ENCODE measurements at regions of chr15 and their contacts with region 1.

Region 1: DNA sequence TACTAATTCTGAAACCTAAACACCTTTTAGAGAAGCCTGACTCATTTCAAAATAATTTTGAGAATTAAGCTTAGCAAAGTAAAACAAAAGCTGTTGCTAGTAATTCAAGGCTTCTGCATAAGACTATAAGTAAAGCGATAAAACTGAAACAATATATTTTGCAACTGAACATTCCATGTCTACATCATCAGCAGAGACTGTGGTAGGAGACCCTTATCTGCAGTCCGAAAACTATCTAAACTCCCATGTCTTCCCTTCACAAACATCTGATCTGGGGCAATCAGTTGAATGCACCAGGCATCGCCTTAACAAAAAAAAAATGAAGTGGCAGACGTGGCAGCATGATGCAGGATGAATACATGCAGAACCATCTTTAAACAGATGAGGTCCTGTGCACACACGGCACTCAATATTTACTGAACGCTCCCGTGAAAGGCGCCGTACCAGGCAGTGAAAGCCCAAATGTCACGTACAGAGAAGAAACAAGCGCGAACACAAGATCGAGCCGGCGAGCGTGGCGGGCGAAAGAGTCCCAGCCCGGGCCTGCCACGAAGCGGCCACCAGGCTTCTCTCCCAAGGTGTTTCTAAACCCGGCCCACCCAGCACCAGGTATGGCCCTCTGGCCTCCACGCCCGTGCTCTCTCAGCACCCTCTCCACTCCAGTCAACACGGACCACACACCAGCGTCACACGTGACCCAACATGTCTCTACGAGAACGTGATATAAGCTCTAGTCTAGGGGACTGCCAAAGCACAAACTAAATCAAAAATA is 63.0 kb downstream of the CHSY1 start:
- DNase-seq: no peak
- ATAC-seq: peak in 7 of 8 donors; percentile 34 to 57 (median 36)
- H3K4me3 ChIP-seq: peak overlapping the region in 9 of 10 donors; percentile 3 to 51 (median 43)
- H3K27ac ChIP-seq: peak overlapping the region; percentile 28 to 96 (median 88)
- H3K4me1 ChIP-seq: peaks cover 15 to 100% (median 80%) of the 10 kb centered on the region in 9 donors
- H3K27me3 ChIP-seq: no peaks in the 10 kb centered on the region
- CTCF ChIP-seq: no peak

Region 2: GRCh38 chr15:101024073-101024695 is 164.6 kb before region 1 on chr15:
- intact Hi-C with region 1: loop called in 1 of 10 experiments (anchors 10 kb)
- DNase-seq: peak in 1 of 2 donors; percentile 52
- ATAC-seq: peak; percentile 69 to 89 (median 84)
- H3K4me3 ChIP-seq: no peak overlapping the region
- H3K27ac ChIP-seq: peak overlapping the region; percentile 15 to 81 (median 72)
- H3K4me1 ChIP-seq: peaks cover 0 to 44% (median 18%) of the 10 kb centered on the region in 9 donors
- H3K27me3 ChIP-seq: peaks cover 0 to 9% (median 0%) of the 10 kb centered on the region in 7 donors
- CTCF ChIP-seq: no peak

Region 3: DNA sequence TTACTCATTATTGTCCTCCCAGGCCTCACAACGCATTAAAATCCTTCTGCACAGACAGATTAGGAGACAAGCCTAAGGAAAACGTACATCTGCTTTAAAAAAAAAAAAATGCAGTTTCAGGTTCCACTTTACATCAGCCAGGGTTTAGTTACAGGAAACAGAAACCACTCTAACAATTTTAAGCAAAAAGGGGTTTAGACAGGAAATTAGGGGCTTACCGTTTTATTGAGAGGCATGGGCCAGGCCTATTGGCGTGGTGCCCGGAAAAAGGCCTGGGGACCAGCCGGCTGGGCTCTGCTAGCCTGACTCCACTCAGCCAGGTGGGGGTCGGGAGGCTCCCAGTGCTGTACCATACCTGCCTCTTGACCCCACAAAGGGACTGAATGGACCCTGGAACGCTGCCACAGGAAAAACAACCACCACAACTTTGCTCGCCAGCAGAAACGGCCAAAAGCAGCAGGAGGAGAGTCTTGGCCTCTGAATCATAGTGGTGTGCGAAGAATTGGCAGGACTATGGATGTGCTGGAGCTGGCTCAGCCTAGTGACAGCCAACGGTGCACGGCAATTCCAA is 61.2 kb before region 1 on chr15:
- intact Hi-C with region 1: loop called in 2 of 10 experiments (anchors 10 kb)
- DNase-seq: peak; percentile 73 to 86
- ATAC-seq: peak; percentile 92 to 95 (median 94)
- H3K4me3 ChIP-seq: no peak overlapping the region
- H3K27ac ChIP-seq: peak overlapping the region; percentile 14 to 94 (median 74)
- H3K4me1 ChIP-seq: peaks cover 0 to 69% (median 23%) of the 10 kb centered on the region in 9 donors
- H3K27me3 ChIP-seq: peaks cover 0 to 5% (median 0%) of the 10 kb centered on the region in 7 donors
- CTCF ChIP-seq: no peak

Region 4: DNA sequence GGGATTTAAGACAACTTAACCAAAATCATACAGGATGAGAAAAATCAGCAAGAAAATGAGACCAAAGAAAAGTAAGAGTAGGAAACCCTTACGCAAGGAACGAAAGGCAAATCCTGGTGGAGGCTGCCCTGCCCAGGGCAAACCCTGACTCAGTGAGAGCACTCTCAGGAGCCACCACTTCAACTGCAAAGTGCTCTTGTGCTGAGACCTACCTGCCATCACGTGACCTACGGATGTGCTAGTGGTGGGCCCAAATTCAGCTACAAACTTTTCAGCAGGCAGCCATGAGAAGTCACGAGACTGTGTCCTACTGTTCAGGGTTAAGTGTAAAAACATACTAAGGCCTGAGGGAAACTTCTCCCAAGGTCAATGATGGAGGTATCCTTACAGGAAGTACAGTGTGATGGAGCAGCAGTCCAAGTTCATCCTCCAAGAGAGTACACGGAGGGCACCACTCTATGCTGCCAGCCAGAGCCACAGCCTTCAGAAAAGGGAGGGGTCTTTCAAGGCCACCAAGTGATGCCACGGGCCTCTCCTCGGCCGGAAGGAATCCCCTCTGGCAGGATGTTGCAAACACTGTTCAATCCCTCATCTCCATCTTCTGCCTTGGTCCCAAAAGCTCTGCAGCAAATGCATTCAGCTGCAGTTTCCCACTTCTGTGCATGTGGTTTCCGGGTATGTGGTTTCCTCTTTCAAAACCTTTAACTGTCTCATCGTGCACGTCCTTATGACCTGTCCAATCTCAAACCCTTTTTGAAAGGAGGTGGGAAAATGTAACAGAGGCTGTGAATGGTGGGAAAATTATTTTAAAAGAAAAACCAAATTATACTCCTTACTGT is 53.6 kb after region 1 on chr15:
- intact Hi-C with region 1: loop called in 5 of 10 experiments (anchors 5 to 10 kb)
- DNase-seq: peak in 1 of 2 donors; percentile 34
- ATAC-seq: peak in 7 of 8 donors; percentile 37 to 70 (median 45)
- H3K4me3 ChIP-seq: peak overlapping the region in 2 of 10 donors; percentile 7 to 30
- H3K27ac ChIP-seq: peak overlapping the region in 8 of 10 donors; percentile 4 to 80 (median 46)
- H3K4me1 ChIP-seq: peaks cover 10 to 100% (median 75%) of the 10 kb centered on the region in 9 donors
- H3K27me3 ChIP-seq: no peaks in the 10 kb centered on the region
- CTCF ChIP-seq: no peak